IMR-90 (cell line): ENCODE measurements at regions of chr9 and their contacts with region 1.

Region 1: DNA sequence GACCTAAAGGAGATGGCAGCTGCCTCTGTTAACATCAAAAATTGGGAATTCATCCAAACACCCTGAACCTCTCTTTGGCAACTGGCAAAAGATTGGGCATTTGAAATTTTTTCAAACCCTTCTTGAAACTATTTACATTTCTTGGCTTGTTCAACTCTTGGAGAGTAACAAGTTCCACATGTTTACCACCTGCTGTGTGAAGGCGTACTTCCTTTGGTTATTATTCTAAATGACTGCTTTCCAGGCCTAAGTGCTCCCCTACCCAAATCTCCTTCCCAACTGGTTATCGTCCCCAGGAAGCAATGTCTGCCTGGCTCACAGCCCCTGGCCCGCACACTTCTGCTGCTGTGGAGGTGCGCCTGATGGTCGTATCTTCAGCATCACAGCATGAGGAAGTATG is 422.7 kb downstream of the DMAC1 start:
- DNase-seq: no peak
- ATAC-seq: no peak
- H3K4me3 ChIP-seq: no peak overlapping the region
- H3K27ac ChIP-seq: peak overlapping the region; percentile 75
- H3K4me1 ChIP-seq: peaks cover 13% of the 10 kb centered on the region
- H3K27me3 ChIP-seq: no peaks in the 10 kb centered on the region
- CTCF ChIP-seq: no peak
- POLR2A ChIP-seq: no peak
- RAD21 ChIP-seq: no peak

Region 2: GRCh38 chr9:6968271-6968670 is 408.6 kb before region 1 on chr9:
- CTCF ChIA-PET with region 1: no interaction called
- POLR2A ChIA-PET with region 1: no interaction called
- dilution Hi-C with region 1: no loop called
- in situ Hi-C with region 1: no loop called
- intact Hi-C with region 1: no loop called
- DNase-seq: peak; percentile 47
- ATAC-seq: peak; percentile 71
- H3K4me3 ChIP-seq: no peak overlapping the region
- H3K27ac ChIP-seq: no peak overlapping the region
- H3K4me1 ChIP-seq: no peaks in the 10 kb centered on the region
- H3K27me3 ChIP-seq: no peaks in the 10 kb centered on the region
- CTCF ChIP-seq: no peak
- POLR2A ChIP-seq: no peak
- RAD21 ChIP-seq: no peak

Region 3: GRCh38 chr9:7298123-7298522 is 78.7 kb before region 1 on chr9:
- CTCF ChIA-PET with region 1: no interaction called
- POLR2A ChIA-PET with region 1: no interaction called
- dilution Hi-C with region 1: no loop called
- in situ Hi-C with region 1: no loop called
- intact Hi-C with region 1: no loop called
- DNase-seq: no peak
- ATAC-seq: no peak
- H3K4me3 ChIP-seq: no peak overlapping the region
- H3K27ac ChIP-seq: no peak overlapping the region
- H3K4me1 ChIP-seq: no peaks in the 10 kb centered on the region
- H3K27me3 ChIP-seq: no peaks in the 10 kb centered on the region; the same call in 1 of the 2 replicates
- CTCF ChIP-seq: no peak
- POLR2A ChIP-seq: no peak
- RAD21 ChIP-seq: no peak

Region 4: GRCh38 chr9:7320139-7320538 is 56.7 kb before region 1 on chr9:
- CTCF ChIA-PET with region 1: no interaction called
- POLR2A ChIA-PET with region 1: no interaction called
- dilution Hi-C with region 1: no loop called
- in situ Hi-C with region 1: no loop called
- intact Hi-C with region 1: loop called (anchors 5 kb)
- DNase-seq: peak; percentile 99
- ATAC-seq: peak; percentile 82
- H3K4me3 ChIP-seq: no peak overlapping the region
- H3K27ac ChIP-seq: peak overlapping the region; percentile 56
- H3K4me1 ChIP-seq: peaks cover 28% of the 10 kb centered on the region
- H3K27me3 ChIP-seq: no peaks in the 10 kb centered on the region
- CTCF ChIP-seq: no peak
- POLR2A ChIP-seq: no peak
- RAD21 ChIP-seq: no peak